Posterior vena cava (tissue), 2 donors: ENCODE measurements at regions of chr20 and their contacts with region 1.

Region 1: DNA sequence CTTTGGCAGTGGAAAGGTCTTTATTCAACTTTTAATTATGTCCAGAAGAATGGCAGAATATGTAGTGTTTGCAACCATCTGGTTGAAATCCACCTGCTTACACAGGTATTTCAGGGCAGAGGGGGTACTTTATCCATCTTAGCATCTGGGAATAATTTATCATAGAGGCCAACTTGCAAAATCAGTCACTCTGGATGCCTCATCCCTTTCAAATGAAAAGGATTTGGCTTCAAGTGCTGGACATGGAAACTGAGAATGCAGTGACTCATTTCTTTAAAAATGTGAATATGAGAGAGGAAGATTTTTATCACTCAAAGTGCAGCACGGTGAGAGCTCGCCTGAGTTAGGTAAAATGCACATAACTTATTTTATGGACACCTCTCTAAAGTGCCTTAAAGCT is 758.3 kb downstream of the KIF16B start:
- DNase-seq: no peak

Region 2: DNA sequence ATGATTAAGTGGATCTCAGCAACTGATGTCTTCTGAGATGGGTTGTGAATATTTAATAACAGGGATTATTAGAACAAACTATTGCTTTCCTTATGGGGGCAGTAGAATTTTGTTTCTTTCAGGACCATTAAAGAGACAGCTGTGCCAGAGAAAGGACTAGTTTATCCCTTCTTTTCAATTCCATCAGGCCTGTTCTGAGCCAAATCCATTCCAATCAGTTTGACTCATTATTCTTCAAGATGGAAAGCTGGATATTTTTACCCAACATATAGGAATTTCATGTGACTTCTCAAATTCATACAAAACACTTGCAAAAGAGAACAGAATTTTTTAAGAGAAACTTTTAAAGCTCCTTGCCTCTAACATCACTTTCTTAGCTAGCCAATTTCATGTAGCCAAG is 755.5 kb before region 1 on chr20:
- intact Hi-C with region 1: loop called in 1 of 2 experiments (anchors 10 kb)
- DNase-seq: no peak

Region 3: DNA sequence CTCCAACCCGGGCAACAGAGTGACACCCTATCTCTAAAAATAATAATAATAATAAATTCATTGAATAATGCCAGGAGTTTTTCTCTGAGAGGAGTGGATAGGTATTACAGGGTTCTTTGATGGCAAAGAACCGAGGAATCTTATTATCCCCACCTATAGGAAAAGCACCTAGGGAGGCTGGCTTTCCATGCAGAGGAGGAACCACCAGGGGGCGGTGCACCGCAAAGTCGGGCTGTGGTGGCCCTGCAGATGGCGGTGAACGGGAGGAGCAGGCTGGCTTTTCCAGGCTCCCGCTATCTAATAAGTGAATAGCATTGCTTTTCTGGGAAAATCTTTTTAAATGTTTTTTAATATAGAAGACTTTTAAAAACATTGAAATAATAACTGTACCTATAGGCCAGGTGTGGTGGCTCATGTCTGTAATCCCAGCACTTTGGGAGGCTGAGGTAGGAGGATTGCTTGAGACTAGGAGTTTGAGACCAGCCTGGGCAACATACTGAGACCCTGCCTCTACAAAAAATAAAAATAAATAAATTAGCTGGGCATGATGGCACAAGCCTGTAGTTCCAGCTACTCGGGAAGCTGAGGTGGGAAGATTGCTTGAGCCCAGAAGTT is 105.8 kb before region 1 on chr20:
- intact Hi-C with region 1: no loop called
- DNase-seq: no peak

Region 4: GRCh38 chr20:15776770-15777466 is 38.0 kb before region 1 on chr20:
- intact Hi-C with region 1: no loop called
- DNase-seq: no peak